ENCODE measurements at regions of chr14 and their contacts with region 1.

Region 1: DNA sequence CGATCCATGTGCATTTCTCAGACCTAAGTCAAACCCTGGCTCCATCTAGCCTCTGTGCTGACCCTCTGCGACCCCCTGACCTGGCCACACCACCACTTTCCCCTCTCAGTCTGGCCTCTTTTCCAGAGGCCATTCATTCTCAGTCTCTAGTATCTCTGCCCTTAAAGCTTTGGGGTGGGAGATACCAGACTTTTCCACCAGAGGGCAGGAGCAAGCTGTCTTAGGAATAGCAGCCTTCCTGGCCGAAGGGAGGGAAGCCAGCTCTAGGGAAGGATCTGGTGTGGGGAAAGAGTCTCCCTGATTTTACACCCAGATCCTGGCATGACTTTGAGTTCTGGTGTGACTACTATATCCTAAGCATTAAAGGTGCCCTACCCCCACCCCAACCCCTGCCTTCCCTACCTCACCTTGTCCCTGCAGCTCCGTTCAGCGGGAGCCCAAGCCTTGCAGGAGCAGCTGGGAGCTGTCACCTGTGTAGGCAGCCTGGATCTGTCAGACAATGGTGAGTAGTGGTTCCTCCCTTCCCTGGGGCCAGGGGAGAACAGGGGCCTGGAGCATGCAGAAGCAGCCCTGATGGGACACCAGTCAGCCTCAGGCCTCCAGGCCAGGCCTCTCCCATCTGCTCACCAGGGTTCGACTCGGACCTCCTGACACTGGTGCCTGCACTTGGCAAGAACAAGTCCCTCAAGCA is 6.6 kb downstream of the CARMIL3 start:
- DNase-seq: peak; percentile 76
- H3K4me3 Mint-ChIP-seq: no peak overlapping the region
- H3K27ac Mint-ChIP-seq: peak overlapping the region; percentile 38
- H3K4me1 Mint-ChIP-seq: peaks cover 9% of the 10 kb centered on the region
- H3K27me3 Mint-ChIP-seq: peaks cover 8% of the 10 kb centered on the region

Region 2: DNA sequence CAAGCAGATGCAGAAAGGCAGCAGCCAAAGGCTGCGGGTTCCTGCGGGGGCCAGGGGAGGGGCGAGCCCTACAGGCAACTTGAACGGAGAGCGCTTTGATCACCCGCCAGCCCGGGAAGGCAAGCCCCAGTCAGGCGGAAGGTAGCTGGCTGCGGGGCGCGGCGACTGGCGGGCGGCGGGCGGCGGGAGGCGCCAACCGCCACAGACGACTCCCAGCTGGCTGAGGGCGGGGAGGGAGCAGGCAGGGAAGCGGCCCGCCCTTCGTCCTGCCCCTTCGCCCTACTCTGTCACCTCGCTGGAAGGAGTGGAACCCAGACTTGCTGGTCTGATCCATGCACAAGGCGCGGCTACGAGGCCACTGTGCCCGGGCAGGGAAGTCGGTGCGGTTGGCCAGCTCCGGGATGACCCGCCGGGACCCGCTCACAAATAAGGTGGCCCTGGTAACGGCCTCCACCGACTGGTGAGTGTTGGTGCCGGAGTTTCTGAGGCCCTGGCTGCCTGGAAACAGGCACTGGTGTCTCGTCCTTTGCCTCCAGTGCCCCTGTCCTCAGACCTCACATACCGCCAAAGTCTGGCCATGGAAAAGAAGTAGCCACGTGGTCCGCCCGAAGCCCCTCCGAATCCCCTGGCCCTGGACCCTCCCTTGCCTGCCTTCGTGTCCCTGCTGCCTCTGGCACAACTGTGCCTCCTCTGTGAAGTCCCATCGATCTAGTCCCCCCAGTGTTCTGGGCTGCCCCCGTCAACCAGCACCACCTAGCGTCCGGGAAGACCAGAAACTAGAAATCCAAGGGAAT is 22.0 kb before region 1 on chr14:
- CTCF ChIA-PET with region 1: no interaction called
- POLR2A ChIA-PET with region 1: no interaction called
- DNase-seq: peak; percentile 72
- H3K4me3 Mint-ChIP-seq: peak overlapping the region; percentile 97
- H3K27ac Mint-ChIP-seq: peak overlapping the region; percentile 80
- H3K4me1 Mint-ChIP-seq: peaks cover 14% of the 10 kb centered on the region
- H3K27me3 Mint-ChIP-seq: no peaks in the 10 kb centered on the region

Region 3: DNA sequence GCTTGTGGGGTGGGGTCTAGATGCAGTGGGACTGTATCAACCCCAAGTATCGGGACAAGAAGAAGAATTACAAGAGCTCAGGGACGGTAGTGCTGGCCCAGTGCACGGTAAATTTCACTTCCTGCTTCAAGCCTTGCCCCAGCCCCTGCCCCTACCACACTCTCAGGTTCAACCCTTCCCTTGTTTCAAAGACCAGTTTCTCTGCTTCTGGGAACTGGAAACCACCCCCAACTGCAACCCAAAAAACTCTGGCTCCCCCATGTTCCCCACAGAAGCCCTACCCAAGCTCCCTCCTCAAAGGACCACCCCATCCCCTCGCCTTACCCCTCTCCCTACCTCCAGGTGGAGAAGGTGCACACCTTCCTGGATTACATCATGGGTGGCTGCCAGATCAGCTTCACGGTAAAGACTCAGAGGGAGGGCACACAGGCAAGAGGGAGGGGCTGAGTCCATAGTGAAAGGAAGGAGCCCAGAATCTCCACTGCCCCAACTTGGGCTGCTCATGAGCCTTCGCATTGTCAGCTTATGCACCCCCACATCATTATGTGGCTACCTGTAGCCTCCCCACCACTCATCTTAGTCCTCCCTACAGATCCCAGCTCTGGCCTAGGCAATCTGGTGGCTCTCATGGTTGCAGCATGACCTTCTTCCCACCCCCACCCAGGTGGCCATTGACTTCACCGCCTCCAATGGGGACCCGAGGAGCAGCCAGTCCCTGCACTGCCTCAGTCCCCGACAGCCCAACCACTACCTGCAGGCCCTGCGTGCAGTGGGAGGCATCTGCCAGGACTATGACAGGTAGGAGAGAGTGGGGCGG is 17.3 kb after region 1 on chr14:
- CTCF ChIA-PET with region 1: interaction called, 41 read pairs
- POLR2A ChIA-PET with region 1: interaction called, 31 read pairs
- DNase-seq: no peak
- H3K4me3 Mint-ChIP-seq: no peak overlapping the region
- H3K27ac Mint-ChIP-seq: no peak overlapping the region
- H3K4me1 Mint-ChIP-seq: peaks cover 30% of the 10 kb centered on the region
- H3K27me3 Mint-ChIP-seq: peaks cover 3% of the 10 kb centered on the region

Region 4: GRCh38 chr14:24080888-24081738 is 22.7 kb after region 1 on chr14:
- CTCF ChIA-PET with region 1: interaction called, 41 read pairs
- POLR2A ChIA-PET with region 1: interaction called, 31 read pairs
- DNase-seq: peak; percentile 83
- H3K4me3 Mint-ChIP-seq: peak overlapping the region; percentile 74
- H3K27ac Mint-ChIP-seq: peak overlapping the region; percentile 75
- H3K4me1 Mint-ChIP-seq: peaks cover 32% of the 10 kb centered on the region
- H3K27me3 Mint-ChIP-seq: peaks cover 11% of the 10 kb centered on the region

Region 5: GRCh38 chr14:24086193-24086955 is 28.0 kb after region 1 on chr14:
- CTCF ChIA-PET with region 1: interaction called, 216 read pairs
- POLR2A ChIA-PET with region 1: interaction called, 53 read pairs
- DNase-seq: no peak
- H3K4me3 Mint-ChIP-seq: no peak overlapping the region
- H3K27ac Mint-ChIP-seq: no peak overlapping the region
- H3K4me1 Mint-ChIP-seq: peaks cover 14% of the 10 kb centered on the region
- H3K27me3 Mint-ChIP-seq: peaks cover 11% of the 10 kb centered on the region